ENCODE measurements at regions of chr5 and their contacts with region 1.

Region 1: GRCh38 chr5:34007621-34008600 is at the start of gene AMACR:
- DNase-seq: peak; percentile 93
- H3K4me3 ChIP-seq: peak within 1 kb of the TSS; percentile 46 to 76 (median 62)
- H3K27ac ChIP-seq: peak within 1 kb of the TSS; percentile 37
- H3K4me1 ChIP-seq: peaks cover 14% of the 10 kb centered on the region
- H3K27me3 ChIP-seq: no peaks in the 10 kb centered on the region
- CTCF ChIP-seq: peak in 1 of 2 donors; percentile 24
- POLR2A ChIP-seq: peak; percentile 98
- total RNA-seq, gene AMACR: 8.3 and 8.7 TPM in 2 replicates

Region 2: GRCh38 chr5:32182463-32183081 is 1825.3 kb before region 1 on chr5:
- CTCF ChIA-PET with region 1: no interaction called
- POLR2A ChIA-PET with region 1: no interaction called
- dilution Hi-C with region 1: no loop called
- intact Hi-C with region 1: no loop called
- DNase-seq: no peak
- H3K4me3 ChIP-seq: no peak overlapping the region
- H3K27ac ChIP-seq: no peak overlapping the region
- H3K4me1 ChIP-seq: no peaks in the 10 kb centered on the region
- H3K27me3 ChIP-seq: peaks cover 0 to 2% of the 10 kb centered on the region in 2 experiments
- CTCF ChIP-seq: no peak
- POLR2A ChIP-seq: no peak

Region 3: DNA sequence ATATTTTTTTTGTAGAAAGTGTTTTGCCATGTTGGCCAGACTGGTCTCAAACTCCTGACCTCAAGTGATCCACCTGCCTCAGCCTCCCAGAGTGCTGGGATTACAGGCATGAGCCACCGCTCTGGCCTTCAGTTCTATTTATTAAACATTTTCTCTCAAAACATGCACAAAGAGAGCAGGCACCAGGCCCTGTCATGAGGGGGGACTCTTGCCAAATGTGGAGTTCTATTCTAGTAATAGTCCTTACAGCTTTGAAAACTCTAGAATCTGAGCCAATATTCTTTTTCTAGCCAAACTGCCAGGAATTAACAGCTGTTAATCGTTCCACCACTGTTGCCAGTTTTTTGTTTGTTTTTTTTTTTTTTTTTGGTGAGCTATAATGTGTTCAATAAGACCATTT is 442.6 kb before region 1 on chr5:
- CTCF ChIA-PET with region 1: no interaction called
- POLR2A ChIA-PET with region 1: no interaction called
- dilution Hi-C with region 1: no loop called
- intact Hi-C with region 1: no loop called
- DNase-seq: no peak
- H3K4me3 ChIP-seq: no peak overlapping the region
- H3K27ac ChIP-seq: no peak overlapping the region
- H3K4me1 ChIP-seq: no peaks in the 10 kb centered on the region
- H3K27me3 ChIP-seq: no peaks in the 10 kb centered on the region
- CTCF ChIP-seq: no peak
- POLR2A ChIP-seq: no peak

Region 4: GRCh38 chr5:33997331-33997983 is 10.5 kb before region 1 on chr5:
- CTCF ChIA-PET with region 1: interaction called, 10 read pairs
- POLR2A ChIA-PET with region 1: interaction called, 5 read pairs
- dilution Hi-C with region 1: no loop called
- intact Hi-C with region 1: no loop called
- DNase-seq: peak; percentile 87
- H3K4me3 ChIP-seq: no peak overlapping the region
- H3K27ac ChIP-seq: no peak overlapping the region
- H3K4me1 ChIP-seq: no peaks in the 10 kb centered on the region
- H3K27me3 ChIP-seq: no peaks in the 10 kb centered on the region
- CTCF ChIP-seq: peak; percentile 64 to 69
- POLR2A ChIP-seq: no peak

Region 5: GRCh38 chr5:34043099-34043876 is 35.4 kb after region 1 on chr5 and contains the start of gene C1QTNF3:
- CTCF ChIA-PET with region 1: no interaction called
- POLR2A ChIA-PET with region 1: no interaction called
- dilution Hi-C with region 1: no loop called
- intact Hi-C with region 1: loop called (anchors 2 kb)
- DNase-seq: peak; percentile 14
- H3K4me3 ChIP-seq: no peak within 1 kb of the TSS
- H3K27ac ChIP-seq: no peak within 1 kb of the TSS
- H3K4me1 ChIP-seq: peaks cover 25% of the 10 kb centered on the region
- H3K27me3 ChIP-seq: no peaks in the 10 kb centered on the region
- CTCF ChIP-seq: no peak
- POLR2A ChIP-seq: no peak
- total RNA-seq, gene C1QTNF3: 1.6 and 2.0 TPM in 2 replicates

Region 6: DNA sequence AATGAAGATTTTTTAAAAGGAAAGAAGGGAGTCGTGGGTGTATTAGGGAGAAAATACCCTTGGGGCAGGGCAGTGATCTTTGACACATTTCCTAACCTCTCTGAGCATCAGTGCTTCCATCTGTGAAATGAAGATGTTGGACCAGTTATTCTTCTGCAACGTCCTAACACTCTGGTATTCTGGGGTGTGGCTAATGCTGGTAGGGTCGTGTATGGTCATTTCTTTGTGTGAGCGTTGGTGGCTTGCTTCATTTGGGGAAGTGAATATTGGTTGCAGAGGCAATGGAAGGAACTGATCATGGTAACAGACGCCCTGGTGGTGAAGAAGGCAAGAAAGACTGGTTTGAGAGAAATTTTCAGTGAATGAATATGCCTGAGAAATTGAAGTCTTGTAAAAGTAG is 763.2 kb after region 1 on chr5:
- CTCF ChIA-PET with region 1: no interaction called
- POLR2A ChIA-PET with region 1: no interaction called
- dilution Hi-C with region 1: no loop called
- intact Hi-C with region 1: no loop called
- DNase-seq: no peak
- H3K4me3 ChIP-seq: no peak overlapping the region
- H3K27ac ChIP-seq: no peak overlapping the region
- H3K4me1 ChIP-seq: no peaks in the 10 kb centered on the region
- H3K27me3 ChIP-seq: no peaks in the 10 kb centered on the region
- CTCF ChIP-seq: no peak
- POLR2A ChIP-seq: no peak

Region 7: GRCh38 chr5:34929150-34929719 is 921.3 kb after region 1 on chr5 and contains the start of gene DNAJC21:
- CTCF ChIA-PET with region 1: no interaction called
- POLR2A ChIA-PET with region 1: no interaction called
- dilution Hi-C with region 1: no loop called
- intact Hi-C with region 1: loop called (anchors 2 kb)
- DNase-seq: peak; percentile 98
- H3K4me3 ChIP-seq: peak within 1 kb of the TSS; percentile 50 to 98 (median 97)
- H3K27ac ChIP-seq: peak within 1 kb of the TSS; percentile 39
- H3K4me1 ChIP-seq: peaks cover 20% of the 10 kb centered on the region
- H3K27me3 ChIP-seq: no peaks in the 10 kb centered on the region
- CTCF ChIP-seq: no peak
- POLR2A ChIP-seq: no peak
- total RNA-seq, gene DNAJC21: 39.4 and 49.2 TPM in 2 replicates